SK-MEL-5 (cell line): ENCODE measurements at regions of chr5 and their contacts with region 1.

Region 1: GRCh38 chr5:66306105-66306843 is 162.2 kb downstream of the SREK1 start:
- DNase-seq: peak; percentile 86

Region 2: DNA sequence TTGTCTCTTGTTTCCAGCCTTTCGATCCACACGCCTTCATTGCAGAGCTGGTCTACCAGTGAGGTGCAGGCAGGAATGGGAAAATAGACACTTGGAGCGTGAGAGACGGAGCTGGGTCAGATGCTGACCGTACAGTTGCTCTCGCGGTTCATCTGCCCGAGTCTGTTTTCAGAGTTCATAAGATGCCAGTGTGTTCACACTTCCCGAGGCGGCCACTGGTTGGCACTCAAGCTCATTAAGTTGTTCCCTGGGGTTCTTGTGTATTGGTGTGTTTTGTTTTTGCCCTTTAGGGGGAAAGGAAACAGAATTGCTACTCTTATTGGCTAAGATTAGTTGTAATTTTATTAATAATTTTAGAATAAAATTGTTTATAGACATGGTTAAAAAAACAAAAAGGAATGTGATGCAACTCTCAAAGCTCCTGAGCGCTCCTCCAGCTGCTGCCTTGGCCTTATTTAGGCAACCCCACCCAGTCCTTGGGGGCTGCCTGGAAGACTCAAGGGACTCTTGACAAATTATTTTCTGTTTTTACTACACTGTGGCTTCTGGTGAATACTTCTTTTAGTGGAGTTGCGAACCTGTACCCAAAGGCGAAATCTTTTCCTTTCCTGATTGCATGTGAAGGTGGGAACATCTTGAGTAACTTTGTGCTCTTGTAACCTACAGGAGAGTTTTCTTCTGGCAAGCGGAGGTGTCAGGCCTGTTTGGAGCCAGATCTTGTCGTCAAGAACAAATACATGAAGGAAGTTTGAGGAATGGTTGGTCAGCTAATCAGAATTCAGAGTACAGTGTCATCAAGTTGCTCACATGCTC is 436.0 kb after region 1 on chr5:
- in situ Hi-C with region 1: loop called (anchors 25 kb)
- DNase-seq: peak; percentile 62